GM12878 (cell line): ENCODE measurements at regions of chr2 and their contacts with region 1.

Region 1: GRCh38 chr2:197453161-197453914 is at the start of gene COQ10B:
- DNase-seq: peak; percentile 99
- ATAC-seq: peak; percentile 96
- H3K4me3 ChIP-seq: peak within 1 kb of the TSS; percentile 94
- H3K27ac ChIP-seq: peak within 1 kb of the TSS; percentile 88
- H3K4me1 ChIP-seq: no peaks in the 10 kb centered on the region
- H3K27me3 ChIP-seq: no peaks in the 10 kb centered on the region
- CTCF ChIP-seq: peak in 2 of 3 experiments; percentile 23 to 34; a peak in 3 of 6 replicates
- EP300 ChIP-seq: no peak
- POLR2A ChIP-seq: peak; percentile 89
- RAD21 ChIP-seq: no peak
- polyA plus RNA-seq, gene COQ10B: 7.7 to 13.1 TPM

Region 2: GRCh38 chr2:197405582-197405981 is 47.8 kb before region 1 on chr2:
- CTCF ChIA-PET with region 1: no interaction called
- POLR2A ChIA-PET with region 1: no interaction called
- RAD21 ChIA-PET with region 1: no interaction called
- SMC1A ChIA-PET with region 1: no interaction called
- in situ Hi-C with region 1: loop called (anchors 5 kb)
- intact Hi-C with region 1: no loop called
- DNase-seq: no peak
- ATAC-seq: no peak
- H3K4me3 ChIP-seq: no peak overlapping the region
- H3K27ac ChIP-seq: no peak overlapping the region
- H3K4me1 ChIP-seq: no peaks in the 10 kb centered on the region
- H3K27me3 ChIP-seq: no peaks in the 10 kb centered on the region
- CTCF ChIP-seq: no peak
- EP300 ChIP-seq: no peak
- POLR2A ChIP-seq: no peak
- RAD21 ChIP-seq: no peak

Region 3: GRCh38 chr2:197434541-197435513 is 18.5 kb before region 1 on chr2 and contains the start of gene SF3B1:
- CTCF ChIA-PET with region 1: interaction called, 9 read pairs
- POLR2A ChIA-PET with region 1: interaction called, 63 read pairs
- RAD21 ChIA-PET with region 1: interaction called, 38 read pairs
- SMC1A ChIA-PET with region 1: interaction called, 32 read pairs
- in situ Hi-C with region 1: no loop called
- intact Hi-C with region 1: loop called (anchors 1 kb)
- DNase-seq: peak; percentile 95
- ATAC-seq: peak; percentile 91
- H3K4me3 ChIP-seq: peak within 1 kb of the TSS; percentile 92
- H3K27ac ChIP-seq: peak within 1 kb of the TSS; percentile 99
- H3K4me1 ChIP-seq: peaks cover 4% of the 10 kb centered on the region; the same call in 1 of the 2 replicates
- H3K27me3 ChIP-seq: no peaks in the 10 kb centered on the region
- CTCF ChIP-seq: no peak
- EP300 ChIP-seq: peak in 1 of 2 experiments; percentile 51; a peak in 1 of 4 replicates
- POLR2A ChIP-seq: peak; percentile 93
- RAD21 ChIP-seq: no peak
- polyA plus RNA-seq, gene SF3B1: 163 to 170 TPM

Region 4: DNA sequence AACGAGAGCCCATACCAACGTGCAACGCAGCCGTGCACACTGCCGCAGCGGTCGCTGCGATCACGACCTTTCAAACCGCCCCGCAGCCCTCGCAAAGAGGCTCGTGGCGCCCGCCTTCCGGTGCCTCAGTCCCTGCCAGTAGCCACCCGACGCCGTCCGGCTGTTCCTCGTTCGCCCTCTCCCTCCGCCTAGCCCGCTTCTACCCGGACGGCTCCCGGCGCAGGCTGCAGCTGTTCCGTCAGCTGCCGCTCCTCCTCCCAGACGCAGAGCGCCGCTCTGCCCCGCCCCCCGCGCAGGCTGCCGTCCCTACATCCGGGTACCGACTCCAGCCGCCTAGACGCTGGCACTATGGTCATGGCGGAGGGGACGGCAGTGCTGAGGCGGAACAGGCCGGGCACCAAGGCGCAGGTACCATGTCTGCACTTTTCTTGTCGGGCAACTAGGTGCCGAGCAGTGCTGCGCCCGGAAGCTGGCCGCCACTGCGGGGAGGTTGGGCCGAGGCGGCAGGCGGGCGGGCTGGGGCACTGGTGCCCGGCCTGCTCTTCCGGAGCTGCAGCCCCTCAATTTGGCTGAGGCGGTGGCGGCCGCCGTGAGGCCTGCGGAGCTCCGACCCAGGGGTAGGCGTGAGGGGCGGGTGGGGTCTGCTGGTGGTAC is 62.5 kb after region 1 on chr2 and contains the start of gene MOB4:
- CTCF ChIA-PET with region 1: no interaction called
- POLR2A ChIA-PET with region 1: interaction called, 7 read pairs
- RAD21 ChIA-PET with region 1: interaction called, 3 read pairs
- SMC1A ChIA-PET with region 1: interaction called, 10 read pairs
- in situ Hi-C with region 1: no loop called
- intact Hi-C with region 1: no loop called
- DNase-seq: peak; percentile 82
- ATAC-seq: peak; percentile 95
- H3K4me3 ChIP-seq: peak within 1 kb of the TSS; percentile 99
- H3K27ac ChIP-seq: peak within 1 kb of the TSS; percentile 95
- H3K4me1 ChIP-seq: peaks cover 7% of the 10 kb centered on the region
- H3K27me3 ChIP-seq: no peaks in the 10 kb centered on the region
- CTCF ChIP-seq: no peak
- EP300 ChIP-seq: peak in 1 of 2 experiments; percentile 99; a peak in 2 of 4 replicates
- POLR2A ChIP-seq: peak; percentile 98
- RAD21 ChIP-seq: no peak
- polyA plus RNA-seq, gene MOB4: 40.6 to 43.4 TPM